ENCODE measurements at regions of chr16 and their contacts with region 1.

Region 1: DNA sequence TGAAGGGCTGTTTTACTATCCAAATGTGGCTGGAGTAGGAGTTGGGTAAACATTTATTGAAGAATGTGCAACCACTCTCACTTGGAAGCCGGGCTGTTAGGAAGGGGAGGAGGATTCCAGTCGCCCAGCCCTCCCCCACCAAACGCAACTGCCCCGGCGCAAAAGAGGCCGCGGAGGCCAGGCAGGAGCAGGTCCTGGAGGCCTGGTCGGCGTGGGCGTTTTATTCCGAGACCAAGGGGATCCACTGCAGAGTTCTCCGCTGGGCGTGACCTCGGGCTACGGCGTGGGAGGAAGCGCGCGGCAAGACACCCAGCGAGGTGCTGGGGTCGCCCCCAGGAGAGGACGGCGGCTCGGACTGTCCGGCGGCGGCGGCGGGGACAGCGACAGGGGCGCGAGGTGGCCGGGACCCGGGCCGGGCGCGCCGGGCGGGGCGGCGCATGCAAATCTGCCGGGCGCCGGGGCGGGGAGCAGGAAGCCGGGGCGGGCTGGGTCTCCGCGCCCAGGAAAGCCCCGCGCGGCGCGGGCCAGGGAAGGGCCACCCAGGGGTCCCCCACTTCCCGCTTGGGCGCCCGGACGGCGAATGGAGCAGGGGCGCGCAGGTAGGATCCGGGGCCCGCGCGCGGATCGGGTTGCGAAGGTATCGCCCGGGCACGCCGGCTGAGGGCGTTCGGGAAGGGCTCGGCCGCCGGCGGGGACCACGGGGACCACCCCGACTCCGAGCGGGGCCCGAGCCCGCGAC is at the start of gene IL4R:
- DNase-seq: peak; percentile 59
- H3K4me3 ChIP-seq: peak within 1 kb of the TSS; percentile 78 to 95 (median 86)
- H3K27ac ChIP-seq: peak within 1 kb of the TSS; percentile 99
- H3K4me1 ChIP-seq: peaks cover 46% of the 10 kb centered on the region
- H3K27me3 ChIP-seq: no peaks in the 10 kb centered on the region
- CTCF ChIP-seq: no peak
- POLR2A ChIP-seq: no peak
- total RNA-seq, gene IL4R: 139 and 150 TPM in 2 replicates

Region 2: GRCh38 chr16:27242868-27243590 is 70.6 kb before region 1 on chr16:
- CTCF ChIA-PET with region 1: interaction called, 4 read pairs
- POLR2A ChIA-PET with region 1: no interaction called
- dilution Hi-C with region 1: no loop called
- intact Hi-C with region 1: loop called (anchors 1 kb)
- DNase-seq: peak; percentile 96
- H3K4me3 ChIP-seq: peak overlapping the region in 1 of 3 experiments; percentile 1
- H3K27ac ChIP-seq: peak overlapping the region; percentile 96
- H3K4me1 ChIP-seq: peaks cover 62% of the 10 kb centered on the region
- H3K27me3 ChIP-seq: no peaks in the 10 kb centered on the region
- CTCF ChIP-seq: peak in 1 of 2 donors; percentile 11
- POLR2A ChIP-seq: peak; percentile 52

Region 3: GRCh38 chr16:27268376-27269299 is 45.0 kb before region 1 on chr16 and contains the start of gene NSMCE1:
- CTCF ChIA-PET with region 1: no interaction called
- POLR2A ChIA-PET with region 1: no interaction called
- dilution Hi-C with region 1: no loop called
- intact Hi-C with region 1: loop called (anchors 1 kb)
- DNase-seq: peak; percentile 92
- H3K4me3 ChIP-seq: peak within 1 kb of the TSS; percentile 61 to 78 (median 77)
- H3K27ac ChIP-seq: peak within 1 kb of the TSS; percentile 58
- H3K4me1 ChIP-seq: peaks cover 16% of the 10 kb centered on the region
- H3K27me3 ChIP-seq: no peaks in the 10 kb centered on the region
- CTCF ChIP-seq: peak in 1 of 2 donors; percentile 23
- POLR2A ChIP-seq: peak; percentile 86
- total RNA-seq, gene NSMCE1: 42.0 and 46.4 TPM in 2 replicates

Region 4: DNA sequence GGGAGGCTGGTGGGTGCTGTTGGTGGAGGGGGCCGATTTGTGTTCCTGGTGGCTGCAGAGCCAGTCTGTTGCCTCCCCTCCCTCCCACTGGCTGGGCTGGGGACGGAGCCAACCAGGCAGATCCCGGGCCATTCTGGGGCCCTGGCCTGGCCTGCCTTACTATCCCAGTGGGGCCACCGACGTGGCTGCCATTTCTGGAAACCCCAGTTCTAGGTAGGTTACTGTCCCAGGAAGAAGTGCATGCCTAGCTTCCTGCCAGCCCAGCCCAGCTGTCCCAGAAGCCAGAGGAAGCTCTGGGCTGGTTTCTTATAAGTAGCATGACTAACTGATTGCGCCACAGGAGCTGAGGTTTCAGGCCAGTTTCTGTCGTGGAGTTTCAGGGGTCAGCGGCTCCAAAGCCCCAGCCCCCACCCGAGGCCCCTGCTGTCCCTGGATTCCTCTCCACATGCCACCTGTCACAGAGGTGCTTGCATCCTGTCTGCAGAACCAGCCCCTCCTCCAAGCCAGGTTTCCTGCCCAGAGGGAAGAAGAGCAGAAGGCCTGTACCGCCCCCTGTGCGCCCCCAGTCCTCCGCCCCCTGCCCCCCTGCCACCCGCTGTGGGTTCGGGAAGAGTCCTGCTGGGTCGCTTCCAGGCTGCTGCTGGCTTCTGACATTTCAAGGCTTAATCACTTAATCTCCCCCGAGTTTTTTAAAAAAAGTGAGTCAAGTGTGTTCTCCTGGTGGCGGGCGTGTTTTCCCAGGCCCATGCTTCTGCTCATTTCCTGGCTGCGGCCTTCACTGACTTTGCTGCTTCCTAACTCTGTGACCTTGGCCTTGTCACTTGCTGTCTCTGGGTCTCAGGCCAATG is 13.4 kb after region 1 on chr16:
- CTCF ChIA-PET with region 1: interaction called, 12 read pairs
- POLR2A ChIA-PET with region 1: no interaction called
- dilution Hi-C with region 1: no loop called
- intact Hi-C with region 1: loop called (anchors 1 kb)
- DNase-seq: peak; percentile 78
- H3K4me3 ChIP-seq: no peak overlapping the region
- H3K27ac ChIP-seq: peak overlapping the region; percentile 91
- H3K4me1 ChIP-seq: peaks cover 37% of the 10 kb centered on the region
- H3K27me3 ChIP-seq: no peaks in the 10 kb centered on the region
- CTCF ChIP-seq: peak in 1 of 2 donors; percentile 3
- POLR2A ChIP-seq: peak; percentile 34

Region 5: GRCh38 chr16:27332105-27332504 is 18.5 kb after region 1 on chr16:
- CTCF ChIA-PET with region 1: interaction called, 12 read pairs
- POLR2A ChIA-PET with region 1: no interaction called
- dilution Hi-C with region 1: no loop called
- intact Hi-C with region 1: loop called (anchors 1 kb)
- DNase-seq: peak; percentile 97
- H3K4me3 ChIP-seq: no peak overlapping the region
- H3K27ac ChIP-seq: peak overlapping the region; percentile 84
- H3K4me1 ChIP-seq: peaks cover 52% of the 10 kb centered on the region
- H3K27me3 ChIP-seq: no peaks in the 10 kb centered on the region
- CTCF ChIP-seq: no peak
- POLR2A ChIP-seq: peak; percentile 54

Region 6: DNA sequence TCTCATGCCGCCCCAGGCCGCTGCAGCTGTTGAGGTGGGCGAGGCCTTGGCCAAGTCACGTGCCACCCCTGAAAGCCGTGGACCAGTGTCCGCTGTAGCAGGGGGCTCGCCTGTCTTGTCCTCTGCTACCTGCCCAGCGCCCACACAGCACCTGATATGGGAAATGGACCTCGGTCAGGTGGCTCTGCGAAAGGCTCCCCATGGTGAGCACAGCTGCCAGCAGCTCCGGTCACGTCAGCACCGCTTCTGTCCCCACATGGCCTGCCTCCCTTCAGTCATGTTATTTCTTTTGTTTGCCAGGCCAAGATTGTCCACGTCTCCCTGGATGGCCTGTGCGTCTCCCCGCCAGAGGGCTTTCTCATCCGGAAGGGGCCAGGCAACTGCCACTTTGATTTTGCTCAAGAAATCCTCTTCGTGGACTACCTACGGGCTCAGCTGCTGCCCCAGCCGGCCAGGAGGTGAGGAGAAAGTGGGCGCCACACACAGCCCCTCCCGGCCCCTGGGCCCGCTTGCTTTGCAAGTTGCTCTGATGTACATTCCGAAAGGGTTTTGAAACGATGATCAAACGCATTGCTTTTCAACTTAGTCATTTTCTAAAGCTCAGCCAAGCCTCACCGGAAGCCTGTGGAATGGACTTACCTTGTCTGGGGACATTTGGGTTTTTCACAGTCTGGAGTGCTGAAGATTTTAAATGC is 456.1 kb after region 1 on chr16:
- CTCF ChIA-PET with region 1: no interaction called
- POLR2A ChIA-PET with region 1: no interaction called
- dilution Hi-C with region 1: no loop called
- intact Hi-C with region 1: no loop called
- DNase-seq: no peak
- H3K4me3 ChIP-seq: no peak overlapping the region
- H3K27ac ChIP-seq: no peak overlapping the region
- H3K4me1 ChIP-seq: no peaks in the 10 kb centered on the region
- H3K27me3 ChIP-seq: no peaks in the 10 kb centered on the region
- CTCF ChIP-seq: no peak
- POLR2A ChIP-seq: no peak